ENCODE measurements at regions of chr5 and their contacts with region 1.

Region 1: DNA sequence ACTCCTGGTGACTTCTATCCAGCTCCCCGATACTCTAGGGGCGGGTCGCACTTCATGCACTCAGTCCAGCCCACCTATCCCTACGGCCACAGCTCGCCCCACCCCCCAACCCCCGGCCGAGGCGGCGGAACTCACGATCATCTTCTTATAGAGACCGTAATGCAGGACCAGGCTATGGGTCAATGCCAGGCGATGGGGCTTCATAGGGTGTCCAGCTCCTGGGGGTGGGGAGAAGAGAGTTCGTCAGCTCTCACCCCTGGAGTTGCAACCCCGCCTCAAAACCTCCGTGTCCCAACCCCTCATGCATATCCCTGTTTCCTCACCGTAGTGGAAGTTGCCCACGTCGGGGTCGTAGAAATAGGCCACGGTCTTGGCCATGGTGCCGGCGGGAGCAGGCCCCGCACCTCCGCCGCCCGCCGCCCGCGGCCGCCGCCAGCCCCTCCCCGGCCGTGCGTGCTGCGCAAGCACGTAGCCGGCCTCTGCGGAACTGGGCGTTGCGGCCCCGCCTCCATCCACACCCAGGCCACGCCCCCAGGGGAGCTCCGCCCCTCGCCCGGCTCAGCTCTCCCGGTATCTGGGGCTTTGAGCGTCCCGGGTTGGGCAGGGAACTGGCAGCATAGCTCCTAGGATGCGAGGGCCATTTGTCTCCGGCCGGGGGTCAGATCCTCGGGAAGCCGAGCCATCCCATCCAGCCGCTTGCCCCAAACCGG is at the starts of genes HDAC3 and RELL2:
- DNase-seq: peak; percentile 95
- H3K4me3 ChIP-seq: peak within 1 kb of the TSS; percentile 75 to 82 (median 77)
- H3K27ac ChIP-seq: peak within 1 kb of the TSS; percentile 38
- H3K4me1 ChIP-seq: peaks cover 21% of the 10 kb centered on the region
- H3K27me3 ChIP-seq: no peaks in the 10 kb centered on the region
- CTCF ChIP-seq: no peak
- POLR2A ChIP-seq: peak; percentile 88
- total RNA-seq, gene HDAC3: 58.5 and 60.2 TPM in 2 replicates
- total RNA-seq, gene RELL2: 3.1 and 3.6 TPM in 2 replicates

Region 2: GRCh38 chr5:141598391-141599350 is 37.9 kb before region 1 on chr5:
- CTCF ChIA-PET with region 1: interaction called, 63 read pairs
- POLR2A ChIA-PET with region 1: no interaction called
- dilution Hi-C with region 1: no loop called
- intact Hi-C with region 1: no loop called
- DNase-seq: no peak
- H3K4me3 ChIP-seq: no peak overlapping the region
- H3K27ac ChIP-seq: no peak overlapping the region
- H3K4me1 ChIP-seq: peaks cover 16% of the 10 kb centered on the region
- H3K27me3 ChIP-seq: no peaks in the 10 kb centered on the region
- CTCF ChIP-seq: no peak
- POLR2A ChIP-seq: no peak

Measured in endothelial cell of umbilical vein (primary cell).